ENCODE measurements at regions of chr7 and their contacts with region 1.

Region 1: DNA sequence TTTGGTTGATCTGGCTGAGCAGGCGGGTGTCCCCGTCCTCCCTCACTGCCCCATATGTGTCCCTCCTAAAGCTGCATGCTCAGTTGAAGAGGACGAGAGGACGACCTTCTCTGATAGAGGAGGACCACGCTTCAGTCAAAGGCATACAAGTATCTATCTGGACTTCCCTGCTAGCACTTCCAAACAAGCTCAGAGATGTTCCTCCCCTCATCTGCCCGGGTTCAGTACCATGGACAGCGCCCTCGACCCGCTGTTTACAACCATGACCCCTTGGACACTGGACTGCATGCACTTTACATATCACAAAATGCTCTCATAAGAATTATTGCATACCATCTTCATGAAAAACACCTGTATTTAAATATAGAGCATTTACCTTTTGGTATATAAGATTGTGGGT is 26.9 kb upstream of the TRIM56 start:
- DNase-seq: peak; percentile 77
- ATAC-seq: peak; percentile 78

Region 2: DNA sequence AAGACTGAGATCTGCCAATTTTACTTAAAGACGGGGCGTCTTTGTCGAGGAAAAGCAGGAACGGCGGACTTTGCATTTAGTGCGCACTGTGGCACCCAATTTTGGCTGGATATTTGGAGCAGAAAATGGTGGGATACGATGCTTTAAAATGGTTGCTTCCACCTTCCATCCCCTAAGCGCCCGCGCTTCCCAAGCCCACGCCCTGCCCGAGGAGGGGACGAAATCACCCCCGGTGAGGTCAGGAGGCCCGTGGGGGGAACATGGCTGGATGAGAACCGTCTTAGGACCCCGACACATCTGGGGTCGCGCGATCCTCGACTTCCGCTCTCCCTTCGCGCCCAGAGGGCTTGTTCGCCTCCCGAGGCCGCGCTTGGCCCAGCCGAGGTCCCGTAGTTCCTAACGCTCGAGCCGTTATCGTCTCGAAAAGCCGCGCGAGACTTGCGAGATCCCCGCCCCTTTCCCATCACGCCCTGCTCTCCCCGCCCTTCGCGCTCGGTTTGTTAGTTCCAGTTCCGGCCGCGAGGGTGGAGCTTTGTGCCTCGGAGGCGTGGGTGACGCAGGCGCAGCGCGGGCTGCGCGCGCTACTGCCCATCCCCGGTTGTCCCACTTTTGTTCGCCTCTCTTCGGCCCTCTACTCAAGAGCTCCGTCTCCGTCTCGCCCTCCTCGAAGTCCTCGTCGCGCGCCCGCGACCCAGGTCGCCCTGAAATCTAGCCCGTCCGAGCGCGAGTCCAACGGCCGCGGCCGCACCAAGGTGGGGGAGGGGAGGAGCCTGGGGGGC is 183.6 kb before region 1 on chr7 and contains the start of gene SRRT:
- intact Hi-C with region 1: no loop called
- DNase-seq: peak; percentile 99
- ATAC-seq: peak; percentile 96
- total RNA-seq, gene SRRT: 63.2 TPM

Region 3: GRCh38 chr7:100894860-100895421 is 163.4 kb before region 1 on chr7:
- intact Hi-C with region 1: loop called (anchors 5 kb)
- DNase-seq: peak; percentile 73
- ATAC-seq: no peak